B cell (primary cell): ENCODE measurements at regions of chr17 and their contacts with region 1.

Region 1: GRCh38 chr17:8894673-8895578 is 27.5 kb upstream of the PIK3R6 start:
- DNase-seq: peak; percentile 71
- ATAC-seq: peak; percentile 51
- H3K4me3 ChIP-seq: no peak overlapping the region
- H3K4me3 Mint-ChIP-seq: no peak overlapping the region
- H3K27ac ChIP-seq: no peak overlapping the region
- H3K27ac Mint-ChIP-seq: no peak overlapping the region
- H3K4me1 ChIP-seq: peaks cover 23 to 38% of the 10 kb centered on the region in 2 donors
- H3K4me1 Mint-ChIP-seq: peaks cover 42% of the 10 kb centered on the region
- H3K27me3 ChIP-seq: no peaks in the 10 kb centered on the region
- H3K27me3 Mint-ChIP-seq: no peaks in the 10 kb centered on the region
- CTCF ChIP-seq: peak; percentile 80

Region 2: DNA sequence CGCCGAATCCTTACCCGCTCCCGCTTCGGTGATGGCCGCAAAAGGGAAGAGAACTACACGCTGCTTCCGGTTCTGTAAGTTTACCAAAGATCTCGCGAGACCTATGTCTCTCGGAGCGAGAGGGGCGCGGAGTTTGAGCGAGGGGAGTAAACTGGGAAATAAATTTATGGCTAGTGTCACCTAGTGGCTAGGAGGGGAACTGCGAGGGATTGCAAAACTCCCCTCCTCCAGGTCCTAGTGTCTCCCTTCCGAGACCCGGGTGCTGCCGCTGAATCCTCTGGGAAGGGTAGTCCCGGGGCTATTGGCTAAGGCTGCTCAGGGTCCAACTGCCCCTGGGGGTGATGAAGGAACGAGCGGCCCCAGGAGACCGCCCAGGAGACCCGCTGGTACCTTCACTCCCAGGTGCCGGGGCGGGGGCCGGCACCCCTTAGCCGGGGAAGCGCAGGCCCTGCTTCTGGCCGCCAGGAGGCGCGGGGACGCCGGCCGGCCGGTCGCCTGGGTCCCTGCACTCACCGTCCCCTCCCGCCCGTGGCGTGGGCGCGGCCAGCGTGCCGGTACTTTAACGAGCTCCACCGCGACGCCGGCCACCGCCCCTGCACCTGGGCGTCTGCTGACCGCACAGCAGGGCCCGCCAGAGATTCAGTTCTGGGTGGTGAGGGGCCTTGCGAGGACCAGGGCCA is 511.6 kb before region 1 on chr17 and contains the start of gene RPL26:
- CTCF ChIA-PET with region 1: interaction called, 4 read pairs
- POLR2A ChIA-PET with region 1: no interaction called
- intact Hi-C with region 1: loop called (anchors 1 kb)
- DNase-seq: peak; percentile 98
- ATAC-seq: peak; percentile 89
- H3K4me3 ChIP-seq: peak within 1 kb of the TSS; percentile 73 to 95 (median 84)
- H3K4me3 Mint-ChIP-seq: peak within 1 kb of the TSS; percentile 89
- H3K27ac ChIP-seq: peak within 1 kb of the TSS; percentile 72 to 82
- H3K27ac Mint-ChIP-seq: peak within 1 kb of the TSS; percentile 87
- H3K4me1 ChIP-seq: peaks cover 25 to 36% of the 10 kb centered on the region in 2 donors
- H3K4me1 Mint-ChIP-seq: peaks cover 50% of the 10 kb centered on the region
- H3K27me3 ChIP-seq: no peaks in the 10 kb centered on the region
- H3K27me3 Mint-ChIP-seq: no peaks in the 10 kb centered on the region
- CTCF ChIP-seq: peak; percentile 100
- total RNA-seq, gene RPL26: 2,601 and 2,684 TPM in 2 replicates

Region 3: GRCh38 chr17:8393420-8394241 is 501.3 kb before region 1 on chr17:
- CTCF ChIA-PET with region 1: no interaction called
- POLR2A ChIA-PET with region 1: no interaction called
- intact Hi-C with region 1: no loop called
- DNase-seq: peak; percentile 66
- ATAC-seq: peak; percentile 71
- H3K4me3 ChIP-seq: no peak overlapping the region
- H3K4me3 Mint-ChIP-seq: peak overlapping the region; percentile 45
- H3K27ac ChIP-seq: peak overlapping the region; percentile 10 to 21
- H3K27ac Mint-ChIP-seq: no peak overlapping the region
- H3K4me1 ChIP-seq: peaks cover 11 to 14% of the 10 kb centered on the region in 2 donors
- H3K4me1 Mint-ChIP-seq: peaks cover 9% of the 10 kb centered on the region
- H3K27me3 ChIP-seq: peaks cover 0 to 18% (median 7%) of the 10 kb centered on the region in 4 experiments
- H3K27me3 Mint-ChIP-seq: peaks cover 19% of the 10 kb centered on the region
- CTCF ChIP-seq: no peak

Region 4: DNA sequence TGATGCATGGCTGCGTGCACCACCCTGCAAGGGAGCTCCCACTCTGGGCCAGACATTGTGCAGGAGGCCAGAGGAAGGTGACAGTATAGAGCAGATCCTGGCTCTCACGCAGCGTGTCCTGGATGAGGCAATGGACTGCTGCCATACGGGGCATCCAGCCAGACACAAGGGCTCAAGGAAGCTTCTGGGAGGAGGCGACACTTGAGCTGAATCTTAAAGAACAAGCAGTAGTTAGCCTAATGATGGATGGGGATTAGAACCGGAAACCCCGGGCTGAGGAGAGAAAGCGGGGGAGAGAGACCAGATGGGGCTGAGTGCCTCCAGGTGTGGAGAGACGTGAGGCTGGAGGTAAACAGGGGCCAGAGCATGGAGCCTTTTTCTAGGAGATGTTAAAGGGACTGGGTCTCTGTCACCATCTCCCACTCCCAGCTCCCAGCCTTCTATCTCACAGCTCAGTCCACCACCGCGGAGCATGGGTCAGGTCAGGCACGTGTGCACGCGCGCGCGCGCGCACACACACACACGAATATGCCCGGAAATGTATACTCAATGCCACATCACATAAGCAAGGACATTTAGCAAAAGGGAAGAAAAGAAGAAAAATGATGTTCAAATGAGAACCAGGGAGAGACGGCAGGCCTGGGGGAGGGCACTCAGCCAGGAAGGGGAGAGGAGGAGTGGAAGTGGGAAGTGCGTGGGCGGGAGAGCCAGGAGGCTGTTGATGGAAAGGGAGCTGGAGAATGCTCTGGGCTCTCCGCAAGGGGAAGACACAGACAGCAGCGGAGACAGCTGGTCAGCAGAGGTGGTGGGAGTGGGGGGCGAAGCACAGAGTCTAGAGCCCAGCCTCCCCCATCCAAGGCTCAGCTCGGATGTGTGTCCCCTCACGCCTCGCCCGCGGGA is 196.5 kb before region 1 on chr17:
- CTCF ChIA-PET with region 1: no interaction called
- POLR2A ChIA-PET with region 1: no interaction called
- intact Hi-C with region 1: no loop called
- DNase-seq: no peak
- ATAC-seq: no peak
- H3K4me3 ChIP-seq: no peak overlapping the region
- H3K4me3 Mint-ChIP-seq: no peak overlapping the region
- H3K27ac ChIP-seq: no peak overlapping the region
- H3K27ac Mint-ChIP-seq: no peak overlapping the region
- H3K4me1 ChIP-seq: no peaks in the 10 kb centered on the region
- H3K4me1 Mint-ChIP-seq: no peaks in the 10 kb centered on the region
- H3K27me3 ChIP-seq: peaks cover 0 to 5% (median 0%) of the 10 kb centered on the region in 4 experiments
- H3K27me3 Mint-ChIP-seq: peaks cover 17% of the 10 kb centered on the region
- CTCF ChIP-seq: no peak

Region 5: DNA sequence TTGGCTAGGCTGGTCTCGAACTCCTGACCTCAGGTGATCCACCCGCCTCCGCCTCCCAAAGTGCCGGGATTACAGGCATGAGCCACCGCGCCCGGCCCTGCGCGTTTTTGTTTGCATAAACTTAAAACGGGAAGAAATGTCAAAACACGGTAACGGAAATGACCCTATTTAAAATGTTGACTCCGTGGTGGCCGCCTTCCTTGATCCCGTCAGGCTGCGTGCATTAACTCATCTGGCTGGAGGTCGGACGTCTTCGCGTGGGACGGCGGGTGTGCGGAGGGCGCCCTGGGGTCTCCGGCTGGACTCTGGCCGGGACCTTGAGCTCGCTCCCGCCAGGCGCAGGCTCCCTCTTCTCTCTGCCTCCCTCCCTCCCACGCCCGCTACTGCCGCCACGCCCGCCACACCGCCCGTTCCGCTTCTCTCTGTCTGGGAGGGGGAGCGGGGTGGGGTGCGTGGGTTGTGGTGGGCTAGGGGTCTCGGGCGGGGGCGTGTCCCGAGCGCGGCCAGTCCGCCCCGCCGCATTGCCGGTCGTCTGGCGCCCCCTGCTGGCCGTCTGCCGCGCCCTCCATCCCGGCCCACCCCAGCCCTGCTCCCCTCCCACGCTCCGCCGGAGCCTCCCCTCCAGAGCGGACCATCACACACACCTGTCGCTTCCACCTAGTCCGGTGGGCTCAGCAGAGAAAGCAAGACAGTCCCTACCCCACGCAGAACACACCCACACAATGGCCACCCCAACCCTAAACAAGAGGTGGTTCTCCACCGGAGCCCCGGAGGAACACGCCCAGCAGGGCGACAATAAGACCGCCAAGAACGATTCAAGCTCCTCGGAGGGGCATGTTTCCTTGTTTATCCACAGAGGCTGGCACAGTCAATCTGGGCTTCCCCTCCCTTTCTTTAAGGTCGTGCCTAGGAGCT is 149.1 kb before region 1 on chr17:
- CTCF ChIA-PET with region 1: interaction called, 18 read pairs
- POLR2A ChIA-PET with region 1: no interaction called
- intact Hi-C with region 1: loop called (anchors 2 kb)
- DNase-seq: peak; percentile 88
- ATAC-seq: peak; percentile 86
- H3K4me3 ChIP-seq: peak overlapping the region; percentile 59 to 75 (median 72)
- H3K4me3 Mint-ChIP-seq: peak overlapping the region; percentile 93
- H3K27ac ChIP-seq: peak overlapping the region; percentile 50 to 68
- H3K27ac Mint-ChIP-seq: peak overlapping the region; percentile 93
- H3K4me1 ChIP-seq: peaks cover 7 to 23% of the 10 kb centered on the region in 2 donors
- H3K4me1 Mint-ChIP-seq: peaks cover 20% of the 10 kb centered on the region
- H3K27me3 ChIP-seq: no peaks in the 10 kb centered on the region
- H3K27me3 Mint-ChIP-seq: peaks cover 9% of the 10 kb centered on the region
- CTCF ChIP-seq: peak; percentile 98

Region 6: DNA sequence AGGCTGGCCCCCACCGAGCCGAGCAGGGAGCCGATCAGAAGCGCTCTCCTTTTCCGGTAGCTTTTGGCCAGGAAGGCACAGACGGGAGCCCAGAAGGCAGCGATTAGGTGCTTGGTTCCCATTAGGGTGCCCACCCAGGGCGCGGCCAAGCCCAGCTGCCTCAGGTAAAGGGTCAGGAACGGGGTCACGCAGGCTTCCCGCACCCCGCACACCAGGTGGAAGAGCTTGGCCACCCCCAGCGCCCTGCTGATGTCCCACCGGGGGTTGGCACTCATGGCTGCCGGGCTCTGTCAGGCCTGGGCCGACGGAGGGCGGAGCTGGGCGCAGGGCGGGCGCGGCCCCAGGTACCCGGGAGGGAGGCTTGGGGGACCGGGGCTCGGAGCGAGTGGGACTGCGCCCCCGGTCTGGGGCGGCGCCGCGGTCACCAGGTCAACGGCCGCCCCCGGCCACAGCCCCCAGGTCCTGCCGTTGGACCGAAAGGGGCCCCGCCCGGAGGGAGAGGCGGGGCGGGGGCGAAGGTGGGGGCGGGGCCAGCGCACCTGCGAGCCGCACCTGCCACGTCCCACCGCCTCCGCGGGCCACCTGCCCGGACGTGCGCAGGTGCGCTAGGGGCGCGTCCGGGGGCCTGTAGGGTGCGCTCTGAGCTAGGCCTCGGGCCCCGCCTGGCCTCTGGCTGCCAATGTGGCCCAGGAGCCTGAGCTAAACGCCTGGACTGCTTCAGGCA is 95.9 kb before region 1 on chr17 and contains the start of gene MFSD6L:
- CTCF ChIA-PET with region 1: interaction called, 56 read pairs
- POLR2A ChIA-PET with region 1: interaction called, 3 read pairs
- intact Hi-C with region 1: loop called (anchors 1 kb)
- DNase-seq: peak; percentile 67
- ATAC-seq: peak; percentile 73
- H3K4me3 ChIP-seq: no peak within 1 kb of the TSS
- H3K4me3 Mint-ChIP-seq: no peak within 1 kb of the TSS
- H3K27ac ChIP-seq: no peak within 1 kb of the TSS
- H3K27ac Mint-ChIP-seq: no peak within 1 kb of the TSS
- H3K4me1 ChIP-seq: peaks cover 0 to 3% of the 10 kb centered on the region in 2 donors
- H3K4me1 Mint-ChIP-seq: peaks cover 12% of the 10 kb centered on the region
- H3K27me3 ChIP-seq: no peaks in the 10 kb centered on the region
- H3K27me3 Mint-ChIP-seq: no peaks in the 10 kb centered on the region
- CTCF ChIP-seq: peak; percentile 40
- total RNA-seq, gene MFSD6L: 0.22 and 0.37 TPM in 2 replicates

Region 7: GRCh38 chr17:8909586-8910270 is 14.8 kb after region 1 on chr17:
- CTCF ChIA-PET with region 1: interaction called, 15 read pairs
- POLR2A ChIA-PET with region 1: no interaction called
- intact Hi-C with region 1: loop called (anchors 1 kb)
- DNase-seq: no peak
- ATAC-seq: no peak
- H3K4me3 ChIP-seq: no peak overlapping the region
- H3K4me3 Mint-ChIP-seq: no peak overlapping the region
- H3K27ac ChIP-seq: no peak overlapping the region
- H3K27ac Mint-ChIP-seq: no peak overlapping the region
- H3K4me1 ChIP-seq: peaks cover 20 to 40% of the 10 kb centered on the region in 2 donors
- H3K4me1 Mint-ChIP-seq: peaks cover 39% of the 10 kb centered on the region
- H3K27me3 ChIP-seq: no peaks in the 10 kb centered on the region
- H3K27me3 Mint-ChIP-seq: no peaks in the 10 kb centered on the region
- CTCF ChIP-seq: no peak